Left ventricle myocardium inferior (tissue), 1 donor: ENCODE measurements at regions of chr10 and their contacts with region 1.

Region 1: DNA sequence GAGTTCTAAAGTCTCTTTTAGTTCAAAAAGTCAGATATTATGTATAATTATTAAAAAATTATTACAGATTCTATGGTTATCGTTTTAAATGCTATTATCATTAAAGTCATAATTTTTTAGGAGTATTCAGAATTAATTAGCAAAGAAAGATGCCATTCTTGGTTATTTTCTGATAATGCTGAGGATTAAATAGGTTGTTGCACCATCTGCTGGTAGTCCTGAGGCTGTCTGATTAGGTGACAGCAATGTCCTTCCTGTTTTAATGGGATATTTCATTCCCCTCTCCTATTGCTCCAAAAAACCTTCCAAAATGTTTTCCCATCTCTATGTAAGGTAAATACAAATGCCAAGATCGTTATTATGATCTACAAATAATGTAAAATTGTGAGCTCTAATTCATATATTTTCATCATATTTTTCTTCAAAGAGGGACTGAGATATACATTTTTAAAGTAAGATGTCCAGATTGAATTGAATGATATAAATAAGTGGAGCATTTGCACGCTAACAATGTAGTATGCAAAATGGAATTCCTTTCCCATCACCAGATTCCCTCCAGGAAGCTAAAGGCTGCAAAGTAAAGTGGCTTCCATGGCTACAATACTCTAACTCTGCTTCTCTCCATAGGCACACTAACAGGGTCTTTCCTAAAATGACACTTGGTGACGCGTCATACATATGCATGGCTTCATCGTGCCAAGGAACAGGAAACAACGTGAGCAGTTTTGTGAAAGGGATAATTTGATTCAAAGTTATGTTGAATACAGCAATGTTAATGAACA is 58.8 kb upstream of the AKR1E2 start:
- DNase-seq: no peak
- H3K4me3 ChIP-seq: no peak overlapping the region
- H3K27ac ChIP-seq: peak overlapping the region; percentile 78
- H3K4me1 ChIP-seq: peaks cover 58% of the 10 kb centered on the region
- H3K27me3 ChIP-seq: no peaks in the 10 kb centered on the region
- CTCF ChIP-seq: peak; percentile 89

Region 2: DNA sequence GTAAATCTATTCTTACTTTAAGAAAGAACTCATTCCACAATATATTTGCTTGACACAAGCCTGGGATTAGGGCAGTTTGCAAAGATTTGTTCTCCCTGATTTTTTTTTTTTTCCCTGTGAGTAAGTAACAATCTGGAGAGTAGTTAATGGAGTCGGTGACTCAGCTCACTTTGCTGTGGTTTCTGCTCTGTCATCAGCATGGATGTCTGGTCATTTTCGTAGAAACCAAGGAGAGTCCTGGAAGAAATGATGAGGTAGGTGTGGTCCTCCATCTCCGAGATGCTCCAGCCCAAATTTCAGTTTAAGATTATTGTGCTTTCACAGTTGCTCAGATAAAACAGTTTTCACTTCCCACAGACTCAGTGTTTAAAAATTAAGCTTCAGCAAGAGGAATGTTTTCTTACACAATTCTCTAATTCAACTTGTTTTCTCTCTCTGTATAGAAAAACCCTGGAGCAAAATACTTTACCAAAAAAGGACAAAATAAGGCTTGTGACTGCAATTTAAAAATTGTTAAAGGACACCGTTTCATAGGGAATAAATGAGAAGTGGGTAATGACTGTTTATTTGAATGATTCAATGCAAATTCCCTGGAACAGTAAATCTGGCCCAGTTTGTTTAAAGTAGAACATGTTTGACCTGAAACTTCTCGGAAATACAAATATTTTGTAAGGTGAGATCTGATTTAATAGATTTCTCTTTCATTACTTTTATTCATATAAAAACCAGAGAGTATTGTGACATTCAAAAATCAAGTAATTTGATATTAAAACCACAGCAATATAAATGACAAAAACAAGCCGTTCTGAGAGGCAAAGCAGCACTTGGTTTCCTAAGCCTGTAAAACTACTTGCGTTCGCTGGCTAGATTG is 1518.1 kb before region 1 on chr10:
- intact Hi-C with region 1: loop called (anchors 10 kb)
- DNase-seq: no peak
- H3K4me3 ChIP-seq: no peak overlapping the region
- H3K27ac ChIP-seq: peak overlapping the region; percentile 43
- H3K4me1 ChIP-seq: no peaks in the 10 kb centered on the region
- H3K27me3 ChIP-seq: no peaks in the 10 kb centered on the region
- CTCF ChIP-seq: no peak

Region 3: DNA sequence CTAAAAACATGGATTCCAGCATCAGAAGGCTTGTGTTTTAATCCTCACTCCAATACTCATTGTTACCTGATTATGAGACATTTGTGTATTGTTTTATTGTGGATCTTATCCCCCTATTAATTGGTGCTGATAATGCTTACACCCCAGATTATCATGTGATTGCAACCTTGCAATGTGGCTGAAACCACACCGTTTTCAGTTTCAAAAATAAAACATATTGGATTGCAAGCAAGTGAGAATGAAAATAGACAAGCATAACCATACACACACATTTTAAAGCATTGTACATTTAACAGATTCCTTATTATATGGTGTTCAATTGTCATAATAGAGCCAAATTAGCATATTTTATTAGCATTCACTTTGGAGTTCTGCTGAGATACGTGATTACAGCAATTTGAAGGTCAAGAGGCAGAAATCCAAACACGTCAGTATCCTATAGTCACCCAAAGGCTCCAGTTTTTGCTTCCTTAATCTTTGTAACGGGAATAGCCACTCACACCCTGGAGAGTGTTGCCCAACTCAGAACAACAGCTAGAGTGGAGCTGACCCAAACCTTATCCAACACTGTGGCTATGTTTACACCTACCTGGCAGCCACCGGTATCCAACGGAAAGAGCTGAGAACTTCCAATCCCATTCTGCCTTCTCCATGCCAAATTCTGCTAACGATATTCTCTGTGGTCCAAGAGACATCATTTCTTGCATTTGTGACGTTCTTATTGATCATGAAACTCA is 665.1 kb before region 1 on chr10:
- intact Hi-C with region 1: no loop called
- DNase-seq: no peak
- H3K4me3 ChIP-seq: no peak overlapping the region
- H3K27ac ChIP-seq: no peak overlapping the region
- H3K4me1 ChIP-seq: no peaks in the 10 kb centered on the region
- H3K27me3 ChIP-seq: no peaks in the 10 kb centered on the region
- CTCF ChIP-seq: no peak

Region 4: GRCh38 chr10:4512671-4513240 is 254.5 kb before region 1 on chr10:
- intact Hi-C with region 1: loop called (anchors 5 kb)
- DNase-seq: peak; percentile 43
- H3K4me3 ChIP-seq: no peak overlapping the region
- H3K27ac ChIP-seq: peak overlapping the region; percentile 89
- H3K4me1 ChIP-seq: peaks cover 44% of the 10 kb centered on the region
- H3K27me3 ChIP-seq: no peaks in the 10 kb centered on the region
- CTCF ChIP-seq: peak; percentile 71

Region 5: GRCh38 chr10:4663162-4663904 is 103.9 kb before region 1 on chr10:
- intact Hi-C with region 1: loop called (anchors 10 kb)
- DNase-seq: peak; percentile 29
- H3K4me3 ChIP-seq: peak overlapping the region; percentile 41
- H3K27ac ChIP-seq: peak overlapping the region; percentile 99
- H3K4me1 ChIP-seq: peaks cover 55% of the 10 kb centered on the region
- H3K27me3 ChIP-seq: no peaks in the 10 kb centered on the region
- CTCF ChIP-seq: no peak

Region 6: GRCh38 chr10:4825851-4826665 is 58.8 kb after region 1 on chr10 and contains the start of gene AKR1E2:
- intact Hi-C with region 1: no loop called
- DNase-seq: peak; percentile 95
- H3K4me3 ChIP-seq: peak within 1 kb of the TSS; percentile 77
- H3K27ac ChIP-seq: peak within 1 kb of the TSS; percentile 97
- H3K4me1 ChIP-seq: peaks cover 21% of the 10 kb centered on the region
- H3K27me3 ChIP-seq: no peaks in the 10 kb centered on the region
- CTCF ChIP-seq: no peak
- total RNA-seq, gene AKR1E2: 5.9 TPM